Cardiac septum (tissue), 1 donor: ENCODE measurements at regions of chr1 and their contacts with region 1.

Region 1: DNA sequence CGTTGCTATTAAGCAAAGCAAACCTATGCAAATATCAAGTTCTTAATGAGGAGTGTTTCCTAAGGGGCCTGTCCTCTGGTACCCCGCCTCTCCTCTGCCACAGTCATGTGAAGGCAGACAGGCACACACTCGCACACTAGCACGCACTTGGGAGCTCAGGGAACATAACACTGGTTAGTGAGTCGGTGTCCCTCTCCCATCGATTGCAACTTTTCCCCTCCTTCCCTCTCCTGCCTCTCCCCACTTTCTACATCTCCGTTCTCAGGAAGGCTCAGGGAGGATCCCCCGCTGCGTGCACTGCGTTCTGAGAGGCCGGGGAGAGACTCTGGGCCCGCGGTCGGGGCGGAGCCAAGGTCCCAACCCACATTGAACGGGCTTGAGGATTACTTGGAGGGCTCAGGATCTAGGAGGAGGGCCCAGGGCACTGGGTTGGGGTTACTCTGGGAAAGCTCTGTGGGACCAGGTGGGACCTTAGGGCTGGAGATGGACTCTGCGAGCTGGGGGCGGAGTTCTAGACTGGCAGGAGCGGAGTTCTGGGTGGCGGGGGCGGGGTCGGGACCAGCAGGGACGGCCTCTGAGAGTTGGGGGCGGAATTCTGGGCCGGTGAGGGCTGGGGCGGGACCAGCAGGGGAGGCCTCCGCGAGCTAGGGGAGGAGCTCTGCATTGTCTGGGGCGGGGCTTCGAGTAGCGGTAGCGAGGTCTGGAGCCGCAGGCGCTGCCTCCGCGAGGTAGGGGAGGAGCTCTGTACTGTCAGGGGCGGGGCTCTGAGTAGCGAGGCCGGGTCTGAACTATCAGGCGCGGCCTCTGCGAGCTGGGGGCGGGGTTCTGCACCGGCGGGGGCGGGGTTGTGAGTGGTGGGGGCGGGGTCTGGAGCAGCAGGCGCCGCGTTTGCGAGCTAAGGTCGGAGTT is 533 bp upstream of the LEPR start:
- DNase-seq: peak; percentile 100

Region 2: GRCh38 chr1:65254319-65255034 is 165.5 kb before region 1 on chr1:
- intact Hi-C with region 1: loop called (anchors 5 kb)
- DNase-seq: peak; percentile 92

Region 3: GRCh38 chr1:65278376-65279069 is 141.4 kb before region 1 on chr1:
- intact Hi-C with region 1: no loop called
- DNase-seq: no peak

Region 4: DNA sequence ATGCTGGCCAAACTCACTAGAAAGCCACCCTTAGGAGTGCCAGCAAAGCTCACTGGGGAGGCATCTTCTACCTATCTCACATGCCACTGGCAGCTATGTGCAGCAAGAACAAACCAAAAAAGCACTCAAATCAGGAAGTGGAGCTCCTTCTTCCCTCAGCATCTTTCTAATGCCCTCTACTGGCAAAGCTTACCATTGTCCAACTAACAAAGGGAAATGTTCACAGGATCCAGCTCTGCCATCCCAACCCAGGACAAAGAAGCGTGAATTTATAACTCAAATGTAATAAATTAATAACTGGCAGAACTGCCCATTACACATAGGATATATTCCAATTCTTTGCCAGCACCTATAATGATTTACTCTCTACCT is 39.4 kb after region 1 on chr1:
- intact Hi-C with region 1: no loop called
- DNase-seq: no peak